SK-N-SH (cell line): ENCODE measurements at regions of chr17 and their contacts with region 1.

Region 1: GRCh38 chr17:28252436-28252835 is 66.6 kb upstream of the TMEM97 start:
- DNase-seq: no peak
- H3K4me3 ChIP-seq: no peak overlapping the region
- H3K27ac ChIP-seq: no peak overlapping the region
- H3K4me1 ChIP-seq: peaks cover 0 to 3% of the 10 kb centered on the region in 2 experiments; a peak in 1 of 4 replicates
- H3K27me3 ChIP-seq: no peaks in the 10 kb centered on the region
- CTCF ChIP-seq: no peak
- EP300 ChIP-seq: no peak
- RAD21 ChIP-seq: no peak

Region 2: DNA sequence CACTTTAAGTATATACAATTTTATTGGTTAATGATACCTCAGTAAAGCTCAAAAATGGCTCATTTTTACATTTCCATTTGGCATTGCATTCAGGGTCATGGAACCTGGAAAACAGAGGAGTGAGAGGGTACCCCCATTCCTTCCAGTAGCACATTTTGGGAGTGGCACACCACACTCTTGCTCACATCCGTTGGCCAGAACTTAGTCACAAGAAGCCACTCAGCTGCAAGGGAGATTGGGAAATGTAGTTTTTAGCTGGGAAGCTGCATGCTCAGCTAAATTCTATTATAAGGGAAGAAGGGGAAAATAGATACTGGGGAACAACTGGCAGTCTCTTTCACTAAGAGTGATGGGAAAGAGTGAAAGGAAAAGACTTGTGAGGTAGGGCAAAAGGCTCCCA is 35.9 kb before region 1 on chr17:
- CTCF ChIA-PET with region 1: no interaction called
- POLR2A ChIA-PET with region 1: no interaction called
- DNase-seq: no peak
- H3K4me3 ChIP-seq: no peak overlapping the region
- H3K27ac ChIP-seq: no peak overlapping the region
- H3K4me1 ChIP-seq: no peaks in the 10 kb centered on the region
- H3K27me3 ChIP-seq: no peaks in the 10 kb centered on the region
- CTCF ChIP-seq: no peak
- EP300 ChIP-seq: no peak
- RAD21 ChIP-seq: no peak

Region 3: DNA sequence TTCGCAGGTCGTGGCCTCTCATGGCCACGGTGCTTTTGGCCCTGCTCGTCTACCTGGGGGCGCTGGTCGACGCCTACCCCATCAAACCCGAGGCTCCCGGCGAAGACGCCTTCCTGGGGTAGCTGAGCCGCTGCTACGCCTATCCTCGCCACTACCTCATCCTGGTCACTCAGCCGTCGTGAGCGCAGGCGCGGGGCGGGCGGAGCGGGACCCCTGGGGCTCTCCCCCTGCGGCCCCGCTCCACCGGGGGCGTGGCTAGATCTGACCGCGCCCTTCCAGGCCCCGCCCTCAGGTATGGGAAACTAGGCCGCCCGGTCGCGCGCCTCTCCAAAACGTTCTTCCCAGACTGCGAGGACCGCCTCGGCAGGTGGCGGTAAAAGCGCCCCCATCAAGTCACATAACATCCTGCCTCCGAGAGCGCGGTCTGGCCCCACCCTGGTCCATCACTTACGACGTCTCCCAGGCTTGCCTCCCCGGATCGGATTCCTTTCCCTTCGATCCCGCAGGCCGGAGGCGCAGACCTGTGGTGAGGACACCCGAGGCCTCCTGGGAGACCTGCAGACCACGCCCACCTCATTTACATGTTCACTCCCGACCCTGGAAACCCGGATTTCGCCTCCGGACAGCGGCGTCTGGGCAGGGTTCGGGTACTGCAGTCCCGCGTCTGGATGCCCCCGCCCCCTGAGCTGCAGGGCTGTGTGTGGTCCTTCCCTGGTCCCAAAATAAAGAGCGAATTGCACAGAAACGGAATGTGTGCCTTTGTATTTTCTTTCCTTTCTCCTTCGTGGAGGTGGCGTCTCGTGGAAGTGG is 24.9 kb before region 1 on chr17:
- CTCF ChIA-PET with region 1: interaction called, 93 read pairs
- POLR2A ChIA-PET with region 1: no interaction called
- DNase-seq: peak; percentile 94
- H3K4me3 ChIP-seq: peak overlapping the region; percentile 54 to 58
- H3K27ac ChIP-seq: peak overlapping the region in 1 of 2 experiments; percentile 67; a peak in 1 of 4 replicates
- H3K4me1 ChIP-seq: peaks cover 0 to 32% of the 10 kb centered on the region in 2 experiments; a peak in 1 of 4 replicates
- H3K27me3 ChIP-seq: no peaks in the 10 kb centered on the region; the same call in 1 of the 2 replicates
- CTCF ChIP-seq: no peak
- EP300 ChIP-seq: no peak
- RAD21 ChIP-seq: no peak

Region 4: DNA sequence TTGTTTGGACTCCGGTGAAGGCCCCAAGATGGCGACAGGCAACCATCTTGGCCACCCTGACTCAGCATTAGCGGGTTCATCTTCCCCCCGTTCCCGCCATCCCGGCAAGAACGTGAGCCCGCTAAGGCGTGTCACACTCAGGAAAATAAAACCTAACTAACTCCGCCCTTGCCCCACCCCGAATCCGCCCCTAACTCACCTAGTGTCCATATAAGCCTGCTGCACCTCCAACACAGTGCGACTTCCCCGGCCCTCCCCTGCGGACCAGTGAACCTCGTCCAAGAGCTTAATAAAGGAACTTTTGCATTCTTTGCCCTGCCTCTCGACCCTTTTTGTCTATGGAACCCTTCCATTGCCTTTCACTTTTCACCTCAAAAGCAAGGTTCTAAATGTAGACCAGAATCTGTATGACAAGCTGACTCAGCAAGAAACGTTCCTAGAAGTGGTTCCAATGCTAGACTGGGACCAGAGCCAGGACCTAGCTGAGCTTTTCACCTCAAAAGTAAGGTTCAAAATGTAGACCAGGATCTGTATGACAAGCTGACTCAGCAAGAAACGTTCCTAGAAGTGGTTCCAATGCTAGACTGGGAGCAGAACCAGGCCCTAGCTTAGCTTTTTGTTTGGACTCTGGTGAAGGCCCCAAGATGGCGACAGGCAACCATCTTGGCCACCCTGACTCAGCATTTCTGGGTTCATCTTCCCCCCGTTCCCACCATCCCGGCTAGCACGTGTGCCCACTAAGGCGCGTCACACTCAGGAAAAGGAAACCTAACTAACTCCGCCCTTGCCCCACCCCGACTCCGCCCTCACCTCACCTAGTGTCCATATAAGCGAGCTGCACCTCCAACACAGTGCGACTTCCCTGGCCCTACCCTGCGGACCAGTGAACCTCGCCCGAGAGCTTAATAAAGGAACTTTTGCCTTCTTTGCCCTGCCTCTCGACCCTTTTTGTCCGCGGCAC is 13.4 kb after region 1 on chr17:
- CTCF ChIA-PET with region 1: interaction called, 18 read pairs
- POLR2A ChIA-PET with region 1: no interaction called
- DNase-seq: no peak
- H3K4me3 ChIP-seq: no peak overlapping the region; a peak in 1 of 4 replicates
- H3K27ac ChIP-seq: no peak overlapping the region
- H3K4me1 ChIP-seq: no peaks in the 10 kb centered on the region
- H3K27me3 ChIP-seq: no peaks in the 10 kb centered on the region
- CTCF ChIP-seq: no peak
- EP300 ChIP-seq: no peak
- RAD21 ChIP-seq: no peak

Region 5: GRCh38 chr17:28280826-28281225 is 28.4 kb after region 1 on chr17:
- CTCF ChIA-PET with region 1: interaction called, 16 read pairs
- POLR2A ChIA-PET with region 1: no interaction called
- DNase-seq: no peak
- H3K4me3 ChIP-seq: no peak overlapping the region
- H3K27ac ChIP-seq: no peak overlapping the region
- H3K4me1 ChIP-seq: peaks cover 0 to 12% of the 10 kb centered on the region in 2 experiments; a peak in 2 of 4 replicates
- H3K27me3 ChIP-seq: no peaks in the 10 kb centered on the region
- CTCF ChIP-seq: no peak
- EP300 ChIP-seq: no peak
- RAD21 ChIP-seq: no peak

Region 6: GRCh38 chr17:28467456-28468025 is 215.1 kb after region 1 on chr17:
- CTCF ChIA-PET with region 1: no interaction called
- POLR2A ChIA-PET with region 1: no interaction called
- DNase-seq: no peak
- H3K4me3 ChIP-seq: no peak overlapping the region
- H3K27ac ChIP-seq: no peak overlapping the region
- H3K4me1 ChIP-seq: peaks cover 0 to 6% of the 10 kb centered on the region in 2 experiments; a peak in 1 of 4 replicates
- H3K27me3 ChIP-seq: peaks cover 18% of the 10 kb centered on the region; the same call in 1 of the 2 replicates
- CTCF ChIP-seq: no peak
- EP300 ChIP-seq: no peak
- RAD21 ChIP-seq: no peak